Gastrocnemius medialis (tissue), 4 donors: ENCODE measurements at regions of chr12 and their contacts with region 1.

Region 1: DNA sequence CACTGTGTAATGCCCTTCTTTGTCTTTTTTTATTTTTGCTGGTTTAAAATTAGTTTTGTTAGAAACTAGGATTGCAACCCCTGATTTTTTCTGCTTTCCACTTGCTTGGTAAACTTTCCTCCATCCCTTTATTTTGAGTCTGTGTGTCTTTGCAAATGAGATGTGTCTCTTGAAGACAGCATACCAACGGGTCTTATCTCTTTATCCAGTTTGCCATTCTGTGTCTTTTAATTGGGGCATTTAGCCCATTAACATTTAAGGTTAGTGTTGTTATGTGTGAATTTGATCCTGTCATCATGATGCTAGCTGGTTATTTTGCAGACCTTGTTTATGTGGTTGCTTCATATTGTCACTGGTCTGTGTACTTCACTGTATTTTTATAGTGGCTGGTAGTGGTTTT is 43.5 kb upstream of the LALBA start:
- DNase-seq: no peak
- ATAC-seq: no peak
- H3K4me3 ChIP-seq: no peak overlapping the region
- H3K27ac ChIP-seq: no peak overlapping the region
- H3K4me1 ChIP-seq: no peaks in the 10 kb centered on the region
- H3K27me3 ChIP-seq: peaks cover 0 to 12% (median 3%) of the 10 kb centered on the region in 3 donors
- CTCF ChIP-seq: no peak
- POLR2A ChIP-seq: no peak

Region 2: DNA sequence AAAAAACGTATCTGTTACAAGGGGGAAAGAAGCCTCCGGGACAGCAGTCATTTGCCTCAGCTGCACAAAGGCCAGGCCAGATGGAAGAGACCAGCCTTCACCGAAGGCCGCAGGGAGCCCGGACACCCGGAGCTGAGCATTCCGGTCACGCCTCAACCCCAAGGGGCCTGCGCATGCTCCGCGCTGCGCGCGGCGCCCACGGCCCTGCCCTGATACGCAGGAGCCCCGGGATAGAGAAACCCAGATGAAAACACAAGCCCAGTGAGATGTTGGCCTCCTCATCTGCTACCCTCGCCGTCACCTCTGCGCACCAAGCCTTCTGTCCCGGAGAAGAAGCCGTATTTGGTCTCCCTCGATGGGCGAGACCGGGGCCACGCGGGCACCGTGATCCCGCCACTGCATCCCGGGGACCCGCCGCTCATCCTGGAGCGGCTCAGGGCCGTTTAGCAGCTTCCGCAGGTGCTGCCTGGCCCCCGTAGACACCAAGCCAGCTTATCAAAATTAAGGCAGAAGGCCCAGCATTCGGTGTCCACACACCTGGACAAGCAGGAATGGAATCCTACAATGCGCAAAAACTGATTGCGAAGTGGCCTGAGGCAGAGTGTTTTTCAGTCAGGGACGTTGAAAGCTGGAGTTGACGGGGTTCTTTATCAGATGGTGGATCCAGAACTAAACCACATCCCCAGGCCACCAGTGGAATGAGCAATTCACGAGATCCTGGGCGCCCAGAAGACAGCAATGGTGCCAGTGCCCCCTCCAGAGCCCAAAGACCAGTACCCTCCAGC is 85.2 kb before region 1 on chr12:
- in situ Hi-C with region 1: no loop called
- intact Hi-C with region 1: loop called (anchors 5 kb)
- DNase-seq: no peak
- ATAC-seq: no peak
- H3K4me3 ChIP-seq: no peak overlapping the region
- H3K27ac ChIP-seq: no peak overlapping the region
- H3K4me1 ChIP-seq: no peaks in the 10 kb centered on the region
- H3K27me3 ChIP-seq: peaks cover 0 to 3% (median 0%) of the 10 kb centered on the region in 3 donors
- CTCF ChIP-seq: no peak
- POLR2A ChIP-seq: no peak

Region 3: GRCh38 chr12:48779869-48780268 is 166.5 kb after region 1 on chr12:
- in situ Hi-C with region 1: no loop called
- intact Hi-C with region 1: no loop called
- DNase-seq: peak in 1 of 2 donors; percentile 24
- ATAC-seq: peak; percentile 34 to 70
- H3K4me3 ChIP-seq: no peak overlapping the region
- H3K27ac ChIP-seq: peak overlapping the region; percentile 54 to 71 (median 67)
- H3K4me1 ChIP-seq: peaks cover 20 to 23% of the 10 kb centered on the region in 2 donors
- H3K27me3 ChIP-seq: no peaks in the 10 kb centered on the region
- CTCF ChIP-seq: no peak
- POLR2A ChIP-seq: no peak